SK-N-SH (cell line): ENCODE measurements at regions of chr19 and their contacts with region 1.

Region 1: GRCh38 chr19:2050991-2051772 is at the start of gene MKNK2:
- DNase-seq: peak; percentile 99
- H3K4me3 ChIP-seq: peak within 1 kb of the TSS; percentile 90 to 94
- H3K27ac ChIP-seq: peak within 1 kb of the TSS; percentile 37 to 88; a peak in 3 of 4 replicates
- H3K4me1 ChIP-seq: peaks cover 29 to 57% of the 10 kb centered on the region in 2 experiments; a peak in 3 of 4 replicates
- H3K27me3 ChIP-seq: no peaks in the 10 kb centered on the region
- CTCF ChIP-seq: peak; percentile 40
- EP300 ChIP-seq: no peak
- RAD21 ChIP-seq: no peak
- polyA plus RNA-seq, gene MKNK2: 58.9 and 65.4 TPM in 2 replicates

Region 2: DNA sequence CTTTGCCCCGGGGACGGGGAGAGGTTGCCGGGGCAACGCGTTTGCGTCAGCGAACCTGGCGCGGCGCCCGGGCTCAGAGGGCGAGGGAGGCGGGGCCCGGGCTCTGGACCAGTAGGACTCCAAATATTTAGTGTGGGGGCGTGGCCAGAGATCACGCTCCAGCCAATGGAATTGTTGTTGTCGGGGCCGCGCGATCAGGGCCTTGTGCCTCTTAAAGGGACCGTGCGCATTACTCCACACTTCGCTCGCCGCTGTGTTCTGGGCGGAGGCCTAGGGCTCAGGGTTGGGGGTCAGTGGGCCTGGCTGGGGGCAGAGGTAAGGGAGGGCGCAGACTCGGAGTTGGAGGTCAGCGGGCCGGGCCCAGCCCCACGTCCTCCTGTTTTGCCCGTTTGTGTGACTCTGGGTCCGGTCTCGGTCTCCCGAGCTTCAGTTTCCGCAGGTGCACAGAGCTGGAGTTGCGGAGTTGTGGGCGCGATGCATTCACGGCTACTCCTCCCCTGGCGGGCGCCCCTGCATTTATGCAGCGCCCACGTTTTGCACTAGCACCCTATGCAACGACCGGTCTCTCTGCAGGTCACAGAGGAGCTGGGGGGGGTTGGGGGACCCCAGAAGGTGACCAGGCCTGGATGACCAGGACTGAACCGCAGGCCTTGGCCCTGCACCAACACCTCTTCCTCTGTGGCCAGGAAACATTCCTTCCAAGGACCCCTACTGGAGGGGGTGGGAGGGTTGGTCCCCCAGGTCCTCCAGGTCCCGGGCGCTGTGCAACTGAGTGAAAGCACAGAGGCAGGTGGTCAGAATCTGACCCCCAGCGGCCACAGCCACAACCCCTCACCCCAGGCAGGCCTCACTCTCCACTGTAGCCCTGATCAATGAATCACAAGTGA is 10.6 kb after region 1 on chr19:
- CTCF ChIA-PET with region 1: interaction called, 4 read pairs
- POLR2A ChIA-PET with region 1: interaction called, 13 read pairs
- DNase-seq: peak; percentile 99
- H3K4me3 ChIP-seq: peak overlapping the region; percentile 53 to 75
- H3K27ac ChIP-seq: peak overlapping the region; percentile 97 to 98
- H3K4me1 ChIP-seq: peaks cover 25 to 42% of the 10 kb centered on the region in 2 experiments; a peak in 3 of 4 replicates
- H3K27me3 ChIP-seq: no peaks in the 10 kb centered on the region
- CTCF ChIP-seq: no peak
- EP300 ChIP-seq: peak in 1 of 2 experiments; percentile 88; a peak in 2 of 4 replicates
- RAD21 ChIP-seq: no peak